Dendritic cell treated with granulocyte-macrophage colony-stimulating factor and Interleukin-4, amounts not matched to agents 40 ng/mL and 50 ng/mL, for 4 days (primary cell): ENCODE measurements at regions of chr17 and their contacts with region 1.

Region 1: GRCh38 chr17:69130627-69131296 is 10.9 kb downstream of the ABCA6 start:
- H3K4me3 Mint-ChIP-seq: no peak overlapping the region
- H3K27ac Mint-ChIP-seq: peak overlapping the region; percentile 93
- H3K4me1 Mint-ChIP-seq: peaks cover 21% of the 10 kb centered on the region
- H3K27me3 Mint-ChIP-seq: no peaks in the 10 kb centered on the region

Region 2: GRCh38 chr17:69060822-69061221 is 69.9 kb before region 1 on chr17 and contains the start of gene ABCA9:
- intact Hi-C with region 1: loop called (anchors 10 kb)
- H3K4me3 Mint-ChIP-seq: no peak within 1 kb of the TSS
- H3K27ac Mint-ChIP-seq: no peak within 1 kb of the TSS
- H3K4me1 Mint-ChIP-seq: peaks cover 30% of the 10 kb centered on the region
- H3K27me3 Mint-ChIP-seq: no peaks in the 10 kb centered on the region